SK-N-SH (cell line): ENCODE measurements at regions of chr14 and their contacts with region 1.

Region 1: DNA sequence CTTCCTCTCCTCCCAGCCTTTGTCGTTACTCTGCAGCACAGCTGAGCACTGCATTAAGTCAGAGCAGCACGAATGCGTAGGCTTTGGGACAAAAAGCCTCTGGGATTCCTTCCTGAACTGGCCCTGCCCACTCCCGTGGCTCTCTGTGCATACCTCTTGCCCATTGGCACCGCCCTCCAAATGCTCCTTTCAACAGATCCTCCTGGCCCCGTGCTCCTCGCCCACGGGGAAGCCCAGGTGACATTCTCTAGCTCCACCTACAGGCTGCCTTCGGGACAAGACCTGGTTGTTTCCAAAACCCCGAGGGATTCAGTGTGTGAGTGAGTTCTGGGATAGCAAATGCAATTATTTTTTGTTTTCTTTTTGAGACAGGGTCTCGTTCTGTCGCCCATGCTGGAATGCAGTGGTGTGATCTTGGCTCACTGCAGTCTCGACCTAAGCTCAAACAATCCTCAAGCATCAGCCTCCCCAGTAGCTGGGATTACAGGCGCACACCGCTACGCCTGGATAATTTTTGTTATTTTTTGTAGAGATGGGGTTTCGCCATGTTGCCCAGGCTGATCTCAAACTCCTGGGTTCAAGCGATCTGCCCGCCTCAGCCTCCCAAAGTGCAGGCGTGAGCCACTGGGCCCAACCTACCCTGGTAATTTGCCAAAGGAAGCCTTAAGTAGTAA is 17.9 kb upstream of the TDRD9 start:
- DNase-seq: peak; percentile 83
- H3K4me3 ChIP-seq: peak overlapping the region in 1 of 2 experiments; percentile 25; a peak in 1 of 4 replicates
- H3K27ac ChIP-seq: no peak overlapping the region
- H3K4me1 ChIP-seq: peaks cover 0 to 16% of the 10 kb centered on the region in 2 experiments; a peak in 1 of 4 replicates
- H3K27me3 ChIP-seq: no peaks in the 10 kb centered on the region
- CTCF ChIP-seq: peak; percentile 80
- EP300 ChIP-seq: no peak
- RAD21 ChIP-seq: peak; percentile 92

Region 2: GRCh38 chr14:103243764-103244737 is 666.3 kb before region 1 on chr14:
- CTCF ChIA-PET with region 1: no interaction called
- POLR2A ChIA-PET with region 1: no interaction called
- DNase-seq: no peak
- H3K4me3 ChIP-seq: no peak overlapping the region
- H3K27ac ChIP-seq: no peak overlapping the region
- H3K4me1 ChIP-seq: no peaks in the 10 kb centered on the region
- H3K27me3 ChIP-seq: no peaks in the 10 kb centered on the region
- CTCF ChIP-seq: no peak
- EP300 ChIP-seq: no peak
- RAD21 ChIP-seq: no peak

Region 3: GRCh38 chr14:103819503-103820307 is 90.7 kb before region 1 on chr14:
- CTCF ChIA-PET with region 1: interaction called, 19 read pairs
- POLR2A ChIA-PET with region 1: no interaction called
- DNase-seq: peak; percentile 24
- H3K4me3 ChIP-seq: no peak overlapping the region
- H3K27ac ChIP-seq: no peak overlapping the region
- H3K4me1 ChIP-seq: peaks cover 5 to 14% of the 10 kb centered on the region in 2 experiments; a peak in 2 of 4 replicates
- H3K27me3 ChIP-seq: no peaks in the 10 kb centered on the region
- CTCF ChIP-seq: no peak
- EP300 ChIP-seq: no peak
- RAD21 ChIP-seq: no peak

Region 4: GRCh38 chr14:103880348-103881267 is 29.8 kb before region 1 on chr14:
- CTCF ChIA-PET with region 1: interaction called, 14 read pairs
- POLR2A ChIA-PET with region 1: no interaction called
- DNase-seq: peak; percentile 62
- H3K4me3 ChIP-seq: no peak overlapping the region
- H3K27ac ChIP-seq: peak overlapping the region in 1 of 2 experiments; percentile 24; a peak in 1 of 4 replicates
- H3K4me1 ChIP-seq: peaks cover 0 to 38% of the 10 kb centered on the region in 2 experiments; a peak in 1 of 4 replicates
- H3K27me3 ChIP-seq: no peaks in the 10 kb centered on the region
- CTCF ChIP-seq: no peak
- EP300 ChIP-seq: no peak
- RAD21 ChIP-seq: no peak

Region 5: DNA sequence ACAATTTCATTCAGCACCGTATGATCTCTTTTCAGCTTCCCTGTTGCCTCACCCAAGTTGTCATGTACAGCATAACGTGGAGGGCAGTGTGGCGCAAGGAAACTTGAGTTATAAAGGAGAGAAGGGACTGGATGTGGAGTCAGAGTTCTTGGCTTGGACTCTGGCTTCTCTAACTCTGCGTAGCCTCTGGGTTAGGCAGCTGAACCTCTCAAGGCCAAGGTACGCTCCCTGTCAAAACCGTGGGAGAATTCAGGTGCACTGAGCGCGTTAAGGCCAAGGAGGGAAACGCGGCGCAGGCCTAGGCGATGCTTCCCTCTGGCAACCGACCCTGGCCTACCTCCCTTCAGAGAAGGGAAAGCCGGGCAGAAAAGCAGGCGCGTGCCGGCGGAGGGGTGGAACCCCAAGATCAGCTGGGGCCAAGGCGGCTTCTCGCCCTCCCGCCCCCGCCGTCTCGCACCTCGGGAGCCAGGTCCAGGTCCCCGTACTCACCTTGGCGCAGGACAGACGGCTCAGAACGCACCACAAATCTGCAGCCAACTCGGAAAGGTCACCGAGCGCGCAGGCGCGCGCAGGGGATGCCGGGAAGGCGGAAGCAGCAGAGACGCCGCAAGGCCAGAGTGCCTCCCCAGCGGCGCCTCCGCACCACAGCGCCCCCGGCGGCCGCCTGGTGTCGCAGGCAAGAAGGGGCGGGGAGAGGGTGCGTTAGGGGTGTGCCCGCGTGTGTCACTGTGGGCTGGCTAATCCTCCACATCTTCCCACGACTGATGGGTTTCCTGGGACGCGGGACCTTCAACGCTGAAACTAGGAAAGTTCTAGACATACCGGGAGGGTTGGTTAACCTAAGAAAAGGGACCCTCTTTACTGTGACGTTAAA is 10.8 kb after region 1 on chr14:
- CTCF ChIA-PET with region 1: interaction called, 31 read pairs
- POLR2A ChIA-PET with region 1: no interaction called
- DNase-seq: peak; percentile 95
- H3K4me3 ChIP-seq: peak overlapping the region; percentile 77 to 100
- H3K27ac ChIP-seq: peak overlapping the region; percentile 56 to 57; a peak in 2 of 4 replicates
- H3K4me1 ChIP-seq: peaks cover 0 to 2% of the 10 kb centered on the region in 2 experiments; a peak in 1 of 4 replicates
- H3K27me3 ChIP-seq: no peaks in the 10 kb centered on the region
- CTCF ChIP-seq: peak; percentile 92
- EP300 ChIP-seq: peak; percentile 9 to 22; a peak in 2 of 4 replicates
- RAD21 ChIP-seq: peak; percentile 48

Region 6: DNA sequence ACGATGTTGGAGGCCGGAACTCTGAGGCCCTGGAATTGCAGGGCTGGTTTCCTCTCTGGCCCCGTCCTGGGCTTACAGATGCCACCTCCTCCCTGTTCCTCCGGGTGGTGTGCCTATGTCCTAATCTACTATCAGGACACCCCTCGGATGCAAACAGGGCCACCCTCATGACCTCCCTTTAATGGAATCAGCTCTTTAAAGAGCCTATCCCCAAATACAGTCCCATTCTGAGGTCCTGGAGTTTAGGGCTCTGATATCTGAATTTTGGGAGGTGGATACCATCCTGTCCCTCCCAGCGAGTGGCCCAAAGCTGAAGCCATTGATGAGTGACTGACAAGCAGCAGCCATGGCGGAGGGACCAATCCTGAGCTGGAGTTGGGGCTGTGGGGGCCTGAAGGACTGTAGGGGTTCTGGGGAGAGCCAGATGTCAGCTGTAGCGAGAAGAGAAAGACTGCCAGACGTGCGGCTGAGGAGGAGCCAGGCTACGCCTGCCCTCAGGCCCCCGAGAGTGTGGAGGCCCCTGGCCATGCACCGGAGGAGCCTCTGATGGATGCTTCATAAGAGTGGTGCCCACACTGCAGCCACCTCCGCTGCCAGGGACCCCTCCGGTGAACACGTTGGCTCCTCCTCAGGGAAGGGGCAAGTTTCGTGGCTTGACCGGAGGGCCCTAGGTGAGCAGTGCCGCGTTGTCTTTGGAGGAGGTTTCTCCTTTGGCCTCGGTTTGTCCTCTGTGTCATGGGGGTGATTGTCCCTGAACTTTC is 328.2 kb after region 1 on chr14:
- CTCF ChIA-PET with region 1: no interaction called
- POLR2A ChIA-PET with region 1: no interaction called
- DNase-seq: no peak
- H3K4me3 ChIP-seq: no peak overlapping the region
- H3K27ac ChIP-seq: no peak overlapping the region
- H3K4me1 ChIP-seq: peaks cover 0 to 3% of the 10 kb centered on the region in 2 experiments; a peak in 1 of 4 replicates
- H3K27me3 ChIP-seq: no peaks in the 10 kb centered on the region
- CTCF ChIP-seq: no peak
- EP300 ChIP-seq: no peak
- RAD21 ChIP-seq: no peak